K562 (cell line): ENCODE measurements at regions of chr1 and their contacts with region 1.

Region 1: DNA sequence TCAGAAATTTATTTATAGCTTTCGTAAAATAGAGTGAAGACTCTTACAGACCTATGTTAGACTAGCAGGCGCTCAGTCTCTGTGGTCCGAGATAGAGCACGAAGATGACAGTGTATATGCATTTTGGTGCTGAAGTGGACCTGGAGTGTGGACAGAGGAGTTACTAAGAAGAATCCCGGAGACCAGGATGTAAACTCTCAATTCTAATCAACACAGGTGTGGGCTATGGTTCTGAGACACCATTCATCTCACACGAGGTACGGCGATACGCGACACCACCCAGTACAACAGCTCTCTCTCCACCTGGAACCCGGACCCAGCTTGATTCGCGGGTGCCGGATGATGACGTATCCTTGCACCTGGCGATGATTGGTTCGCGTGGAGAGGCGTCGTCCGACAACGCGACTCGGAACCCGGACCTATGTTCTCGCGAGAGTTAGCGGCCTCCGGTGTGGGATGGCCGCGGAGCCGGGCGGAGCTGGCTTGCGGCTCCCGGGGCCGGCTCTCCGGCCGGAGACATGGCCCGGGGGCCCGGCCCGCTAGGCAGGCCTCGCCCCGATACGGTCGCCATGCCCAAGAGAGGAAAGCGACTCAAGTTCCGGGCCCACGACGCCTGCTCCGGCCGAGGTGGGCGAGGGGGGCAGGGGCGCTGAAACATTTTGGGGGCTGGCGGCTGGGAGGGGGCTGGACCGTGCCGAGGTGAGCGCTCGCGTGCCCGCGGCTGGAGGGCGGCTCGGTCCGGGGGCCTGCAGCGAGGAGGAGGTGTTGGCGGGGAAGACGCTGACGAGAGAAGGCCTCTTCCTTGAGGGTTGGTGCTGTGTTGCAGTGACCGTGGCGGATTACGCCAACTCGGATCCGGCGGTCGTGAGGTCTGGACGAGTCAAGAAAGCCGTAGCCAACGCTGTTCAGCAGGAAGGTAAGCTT is at the start of gene TMEM183A:
- DNase-seq: peak; percentile 96 to 100 (median 96)
- ATAC-seq: peak; percentile 94
- H3K4me3 ChIP-seq: peak within 1 kb of the TSS; percentile 89
- H3K27ac ChIP-seq: peak within 1 kb of the TSS; percentile 99
- H3K4me1 ChIP-seq: peaks cover 14 to 19% of the 10 kb centered on the region in 2 experiments
- H3K27me3 ChIP-seq: no peaks in the 10 kb centered on the region
- CTCF ChIP-seq: no peak
- EP300 ChIP-seq: no peak
- POLR2A ChIP-seq: peak; percentile 99
- RAD21 ChIP-seq: no peak
- polyA plus RNA-seq, gene TMEM183A: 23.4 to 31.8 TPM

Region 2: GRCh38 chr1:202888531-202889360 is 118.5 kb before region 1 on chr1 and contains the start of gene RABIF:
- CTCF ChIA-PET with region 1: no interaction called
- POLR2A ChIA-PET with region 1: interaction called, 12 read pairs
- in situ Hi-C with region 1: no loop called
- intact Hi-C with region 1: no loop called
- DNase-seq: peak; percentile 98 to 99 (median 99)
- ATAC-seq: peak; percentile 96
- H3K4me3 ChIP-seq: peak within 1 kb of the TSS; percentile 63
- H3K27ac ChIP-seq: peak within 1 kb of the TSS; percentile 83
- H3K4me1 ChIP-seq: peaks cover 10 to 24% of the 10 kb centered on the region in 2 experiments
- H3K27me3 ChIP-seq: no peaks in the 10 kb centered on the region
- CTCF ChIP-seq: peak; percentile 17 to 48 (median 24); a peak in 3 of 6 replicates
- EP300 ChIP-seq: no peak
- POLR2A ChIP-seq: peak; percentile 99
- RAD21 ChIP-seq: no peak
- polyA plus RNA-seq, gene RABIF: 8.7 to 10.1 TPM

Region 3: DNA sequence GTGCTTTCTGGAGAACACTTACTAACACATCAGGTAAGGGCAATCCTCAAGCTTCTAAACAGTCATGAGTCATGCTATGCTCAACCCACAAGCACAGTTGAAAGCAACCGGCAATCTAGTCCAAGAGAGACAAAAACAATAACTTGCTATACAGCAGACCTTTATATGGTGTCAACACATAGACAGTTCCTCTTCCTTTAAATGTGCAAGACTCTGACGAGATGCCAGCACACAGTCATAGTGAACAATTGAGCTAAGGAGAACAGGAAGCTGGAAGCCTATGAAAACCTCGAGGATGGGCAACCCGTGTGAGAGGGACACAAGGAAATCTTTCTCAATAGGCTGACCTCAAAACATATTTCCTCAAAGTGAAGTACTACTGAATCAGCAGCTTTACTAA is 54.4 kb before region 1 on chr1:
- CTCF ChIA-PET with region 1: no interaction called
- POLR2A ChIA-PET with region 1: interaction called, 10 read pairs
- in situ Hi-C with region 1: no loop called
- intact Hi-C with region 1: no loop called
- DNase-seq: no peak
- ATAC-seq: peak; percentile 27
- H3K4me3 ChIP-seq: no peak overlapping the region
- H3K27ac ChIP-seq: no peak overlapping the region
- H3K4me1 ChIP-seq: peaks cover 4 to 27% of the 10 kb centered on the region in 2 experiments
- H3K27me3 ChIP-seq: no peaks in the 10 kb centered on the region
- CTCF ChIP-seq: no peak
- EP300 ChIP-seq: no peak
- POLR2A ChIP-seq: no peak
- RAD21 ChIP-seq: no peak

Region 4: GRCh38 chr1:202991112-202991511 is 16.1 kb before region 1 on chr1:
- CTCF ChIA-PET with region 1: no interaction called
- POLR2A ChIA-PET with region 1: interaction called, 11 read pairs
- in situ Hi-C with region 1: no loop called
- intact Hi-C with region 1: no loop called
- DNase-seq: no peak
- ATAC-seq: peak; percentile 33; the same call in 1 of the 3 replicates
- H3K4me3 ChIP-seq: no peak overlapping the region
- H3K27ac ChIP-seq: no peak overlapping the region
- H3K4me1 ChIP-seq: peaks cover 5% of the 10 kb centered on the region in 2 experiments; a peak in 1 of 5 replicates
- H3K27me3 ChIP-seq: no peaks in the 10 kb centered on the region
- CTCF ChIP-seq: no peak
- EP300 ChIP-seq: no peak
- POLR2A ChIP-seq: no peak
- RAD21 ChIP-seq: no peak

Region 5: DNA sequence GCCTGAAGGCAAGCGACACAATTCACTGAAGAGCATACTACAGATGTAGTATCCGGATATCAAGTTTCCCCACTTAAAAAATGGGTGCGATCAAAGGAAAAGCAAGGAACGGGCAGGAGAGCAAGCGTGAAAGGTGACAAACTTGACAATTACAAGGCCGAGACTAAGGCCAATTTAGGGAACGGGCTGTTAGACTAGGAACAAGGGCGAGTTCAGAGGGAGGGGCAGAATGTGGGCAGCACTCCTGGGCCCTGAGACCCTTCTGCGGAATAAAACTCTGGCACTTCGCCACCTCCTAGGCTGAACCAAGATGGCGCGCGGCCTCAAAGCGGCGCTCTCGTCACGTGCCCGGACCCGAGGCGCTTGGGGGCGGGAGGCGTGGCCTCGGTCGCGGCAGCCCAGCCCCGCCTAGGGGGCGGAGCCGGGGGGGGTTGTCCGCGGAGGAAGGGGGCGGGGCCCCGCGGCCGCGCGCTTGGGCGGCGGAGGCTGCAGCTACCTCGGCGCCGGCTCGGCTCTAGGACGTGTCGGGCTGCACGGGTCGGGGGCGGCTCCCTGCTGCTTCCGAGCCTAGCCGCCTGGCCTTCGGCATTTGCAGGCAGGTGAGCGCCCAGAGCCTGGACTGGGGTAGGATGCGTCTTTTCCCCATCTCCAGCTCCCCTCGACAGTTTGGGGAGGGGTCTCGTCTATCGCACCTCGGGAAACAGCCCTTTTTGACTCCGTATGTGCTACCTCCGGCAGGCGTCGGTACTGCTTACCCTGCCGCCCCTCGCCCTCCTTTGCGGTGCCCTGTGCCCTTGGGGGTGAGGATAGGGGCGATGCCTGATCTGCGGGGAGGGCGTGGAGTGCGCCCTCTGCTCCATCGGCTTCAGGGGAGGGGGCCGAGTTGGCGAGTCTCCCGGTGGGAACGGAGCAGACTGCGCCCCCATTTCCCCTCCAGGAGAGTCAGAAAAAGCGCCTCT is 19.1 kb after region 1 on chr1 and contains the start of gene PPFIA4:
- CTCF ChIA-PET with region 1: no interaction called
- POLR2A ChIA-PET with region 1: interaction called, 14 read pairs
- in situ Hi-C with region 1: no loop called
- intact Hi-C with region 1: no loop called
- DNase-seq: peak; percentile 95 to 100 (median 100)
- ATAC-seq: peak; percentile 96
- H3K4me3 ChIP-seq: peak within 1 kb of the TSS; percentile 53
- H3K27ac ChIP-seq: peak within 1 kb of the TSS; percentile 72
- H3K4me1 ChIP-seq: peaks cover 11 to 27% of the 10 kb centered on the region in 2 experiments; a peak in 4 of 5 replicates
- H3K27me3 ChIP-seq: no peaks in the 10 kb centered on the region; a peak in 1 of 5 replicates
- CTCF ChIP-seq: peak in 2 of 3 experiments; percentile 16 to 25; a peak in 2 of 6 replicates
- EP300 ChIP-seq: no peak
- POLR2A ChIP-seq: peak; percentile 76
- RAD21 ChIP-seq: no peak
- polyA plus RNA-seq, gene PPFIA4: 0.07 to 0.08 TPM

Region 6: GRCh38 chr1:203340112-203340804 is 333.0 kb after region 1 on chr1:
- CTCF ChIA-PET with region 1: no interaction called
- POLR2A ChIA-PET with region 1: no interaction called
- in situ Hi-C with region 1: no loop called
- intact Hi-C with region 1: no loop called
- DNase-seq: peak; percentile 84 to 88 (median 88)
- ATAC-seq: peak; percentile 87
- H3K4me3 ChIP-seq: no peak overlapping the region
- H3K27ac ChIP-seq: no peak overlapping the region
- H3K4me1 ChIP-seq: peaks cover 0 to 4% of the 10 kb centered on the region in 2 experiments; a peak in 3 of 5 replicates
- H3K27me3 ChIP-seq: peaks cover 26 to 44% of the 10 kb centered on the region in 2 experiments
- CTCF ChIP-seq: peak; percentile 93 to 97 (median 94)
- EP300 ChIP-seq: no peak
- POLR2A ChIP-seq: no peak
- RAD21 ChIP-seq: peak; percentile 93 to 94

Region 7: GRCh38 chr1:204359474-204360255 is 1352.5 kb after region 1 on chr1 and contains the start of gene PLEKHA6:
- CTCF ChIA-PET with region 1: no interaction called
- POLR2A ChIA-PET with region 1: no interaction called
- in situ Hi-C with region 1: no loop called
- intact Hi-C with region 1: no loop called
- DNase-seq: peak; percentile 33 to 42 (median 38)
- ATAC-seq: peak; percentile 48
- H3K4me3 ChIP-seq: no peak within 1 kb of the TSS
- H3K27ac ChIP-seq: no peak within 1 kb of the TSS
- H3K4me1 ChIP-seq: peaks cover 28 to 34% of the 10 kb centered on the region in 2 experiments
- H3K27me3 ChIP-seq: peaks cover 11 to 25% of the 10 kb centered on the region in 2 experiments; a peak in 3 of 5 replicates
- CTCF ChIP-seq: peak; percentile 50 to 96 (median 83)
- EP300 ChIP-seq: no peak
- POLR2A ChIP-seq: no peak
- RAD21 ChIP-seq: peak; percentile 60 to 71
- polyA plus RNA-seq, gene PLEKHA6: under 0.01 TPM in 1 of 2 experiments, not detected in the other